GM10248 (cell line): ENCODE measurements at regions of chr10 and their contacts with region 1.

Region 1: GRCh38 chr10:14611968-14612693 is 162.6 kb downstream of the FAM107B start:
- DNase-seq: no peak
- CTCF ChIP-seq: no peak

Region 2: DNA sequence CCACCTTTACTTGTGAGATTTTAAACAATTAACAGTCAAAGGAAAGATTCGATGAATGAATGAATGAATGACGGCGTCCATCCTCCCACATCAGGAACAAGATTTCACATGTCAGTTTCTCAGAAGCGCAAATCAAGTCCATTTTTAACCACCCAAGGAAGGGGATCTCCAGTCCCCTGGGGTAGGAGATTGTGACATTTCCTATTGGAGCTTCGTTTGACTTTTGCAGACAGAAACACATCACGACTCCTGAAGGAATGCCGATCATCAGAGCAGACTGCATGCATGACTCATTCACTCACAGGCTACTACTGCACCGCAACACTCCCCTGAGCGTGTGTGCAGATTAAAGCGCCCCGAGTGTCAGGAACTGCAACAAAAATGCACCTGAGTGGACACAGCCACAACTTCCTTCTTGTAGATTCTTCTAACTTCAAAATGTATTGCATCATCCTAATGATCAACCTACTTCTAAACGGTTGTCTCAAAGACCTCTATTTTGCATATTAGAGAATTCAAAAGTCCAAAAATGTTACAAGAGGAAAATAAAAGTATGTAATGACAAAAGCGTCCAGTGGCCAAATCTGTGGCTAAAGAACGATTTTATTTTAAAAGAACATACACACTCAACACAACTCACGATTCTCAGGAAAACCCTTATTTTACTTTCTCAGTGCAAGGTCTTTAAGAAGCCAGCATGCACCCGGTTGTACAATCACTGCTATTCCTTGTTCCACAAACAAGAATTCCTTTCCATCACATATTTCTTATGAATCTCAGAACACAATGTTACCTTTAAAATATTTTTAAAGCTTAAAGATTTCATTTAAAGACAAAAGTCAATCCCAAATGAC is 10.0 kb before region 1 on chr10:
- CTCF ChIA-PET with region 1: no interaction called
- POLR2A ChIA-PET with region 1: no interaction called
- DNase-seq: peak; percentile 61
- CTCF ChIP-seq: no peak

Region 3: GRCh38 chr10:14625192-14625631 is 13.1 kb after region 1 on chr10:
- CTCF ChIA-PET with region 1: interaction called, 13 read pairs
- POLR2A ChIA-PET with region 1: no interaction called
- DNase-seq: no peak
- CTCF ChIP-seq: no peak